ENCODE measurements at regions of chr19 and their contacts with region 1.

Region 1: DNA sequence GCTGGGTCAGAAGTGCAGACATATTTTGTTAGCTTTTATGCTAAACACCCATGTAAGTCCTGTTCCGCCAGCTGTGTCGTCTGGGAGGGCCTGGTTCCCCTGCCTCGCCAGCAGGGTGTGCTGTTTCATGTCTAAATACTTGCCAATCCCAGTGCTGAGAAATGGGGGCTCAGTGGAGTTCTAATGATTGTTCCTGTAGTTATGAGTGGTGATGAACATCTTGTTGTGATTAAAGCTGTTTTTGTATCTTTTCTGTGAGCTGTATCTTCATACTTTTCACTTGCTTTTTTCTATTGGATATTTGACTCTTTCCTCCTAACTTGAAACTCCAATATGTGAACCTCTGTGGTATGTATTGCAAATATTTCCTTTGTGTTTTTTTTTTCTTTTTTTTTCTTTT is 32.7 kb downstream of the KDM4B start:
- DNase-seq: peak; percentile 30
- H3K27ac ChIP-seq: peak overlapping the region; percentile 70
- CTCF ChIP-seq: no peak; the same call in 1 of the 2 replicates

Region 2: DNA sequence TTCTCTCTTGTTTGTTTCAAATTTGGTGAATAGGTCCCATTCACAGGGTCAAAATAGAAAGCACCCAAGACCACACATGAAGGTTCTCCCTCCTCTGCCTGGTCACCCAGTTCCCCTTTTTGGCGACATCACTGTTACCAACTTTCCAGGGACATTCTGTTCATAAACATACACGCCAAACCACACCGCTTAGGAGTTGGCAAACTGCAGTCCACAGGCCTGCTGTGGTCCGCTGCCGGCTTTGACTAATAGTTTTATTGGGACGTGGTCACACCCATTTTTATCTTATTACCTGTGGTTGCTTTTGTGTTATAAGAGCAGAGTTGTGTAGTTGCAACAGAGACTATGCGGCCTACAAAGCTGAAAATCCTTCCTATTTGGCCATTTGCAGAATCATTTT is 68.1 kb before region 1 on chr19:
- CTCF ChIA-PET with region 1: no interaction called
- POLR2A ChIA-PET with region 1: no interaction called
- DNase-seq: no peak
- H3K27ac ChIP-seq: peak overlapping the region; percentile 72
- CTCF ChIP-seq: no peak

Region 3: DNA sequence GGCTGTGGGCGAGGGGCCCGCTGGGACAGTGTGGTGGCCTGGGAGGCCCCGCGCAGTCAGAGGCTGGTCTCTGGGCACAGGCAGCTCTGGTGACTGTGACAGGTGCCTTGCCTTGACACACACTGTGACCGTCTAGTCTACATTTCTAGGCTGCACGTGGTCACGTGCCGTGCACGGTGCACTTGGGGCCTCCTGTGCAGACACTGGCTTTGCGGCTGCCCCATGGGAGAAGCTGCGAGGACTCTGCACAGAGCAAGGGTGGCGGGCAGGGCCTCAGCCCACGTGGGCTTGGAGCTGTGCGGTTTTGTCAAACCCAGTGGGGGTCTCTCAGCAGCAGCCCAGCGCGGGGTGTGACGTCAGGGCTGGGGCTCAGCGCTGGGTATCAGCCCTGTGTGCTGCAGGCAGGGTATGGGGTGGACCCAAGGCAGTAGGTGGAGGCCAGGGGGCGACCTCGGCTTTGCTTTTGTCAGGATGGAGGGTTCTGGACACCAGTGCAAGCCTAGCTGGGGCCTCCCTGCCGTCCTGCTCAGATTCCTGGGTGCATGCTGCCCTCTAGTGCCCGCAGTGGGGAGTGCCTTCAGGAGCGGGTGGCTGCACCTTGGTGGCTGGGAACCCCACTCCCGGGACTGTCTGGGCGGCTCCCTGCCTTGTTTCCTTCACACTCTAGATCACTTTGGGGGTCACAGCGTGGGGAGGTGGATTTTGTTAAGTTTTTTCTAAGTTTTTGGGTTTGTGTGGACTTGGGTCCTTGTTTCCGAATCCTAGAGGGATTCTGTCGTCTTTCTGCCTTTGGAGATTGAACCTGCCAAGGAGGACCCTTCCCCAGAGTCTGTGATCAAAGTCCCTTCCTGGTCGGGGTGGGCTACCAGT is 29.9 kb after region 1 on chr19:
- CTCF ChIA-PET with region 1: interaction called, 10 read pairs
- POLR2A ChIA-PET with region 1: no interaction called
- DNase-seq: peak; percentile 87
- H3K27ac ChIP-seq: peak overlapping the region; percentile 33
- CTCF ChIP-seq: peak; percentile 89

Region 4: GRCh38 chr19:5083547-5083965 is 81.9 kb after region 1 on chr19:
- CTCF ChIA-PET with region 1: no interaction called
- POLR2A ChIA-PET with region 1: no interaction called
- DNase-seq: no peak
- H3K27ac ChIP-seq: no peak overlapping the region
- CTCF ChIP-seq: no peak

Region 5: GRCh38 chr19:5112681-5113557 is 111.3 kb after region 1 on chr19:
- CTCF ChIA-PET with region 1: no interaction called
- POLR2A ChIA-PET with region 1: no interaction called
- DNase-seq: no peak
- H3K27ac ChIP-seq: no peak overlapping the region
- CTCF ChIP-seq: no peak